ENCODE measurements at regions of chr6 and their contacts with region 1.

Region 1: GRCh38 chr6:36666726-36667591 is 11.6 kb upstream of the CDKN1A start:
- DNase-seq: peak; percentile 98
- H3K4me3 Mint-ChIP-seq: no peak overlapping the region
- H3K27ac Mint-ChIP-seq: peak overlapping the region; percentile 91
- H3K4me1 Mint-ChIP-seq: peaks cover 31% of the 10 kb centered on the region
- H3K27me3 Mint-ChIP-seq: no peaks in the 10 kb centered on the region
- CTCF ChIP-seq: no peak

Region 2: DNA sequence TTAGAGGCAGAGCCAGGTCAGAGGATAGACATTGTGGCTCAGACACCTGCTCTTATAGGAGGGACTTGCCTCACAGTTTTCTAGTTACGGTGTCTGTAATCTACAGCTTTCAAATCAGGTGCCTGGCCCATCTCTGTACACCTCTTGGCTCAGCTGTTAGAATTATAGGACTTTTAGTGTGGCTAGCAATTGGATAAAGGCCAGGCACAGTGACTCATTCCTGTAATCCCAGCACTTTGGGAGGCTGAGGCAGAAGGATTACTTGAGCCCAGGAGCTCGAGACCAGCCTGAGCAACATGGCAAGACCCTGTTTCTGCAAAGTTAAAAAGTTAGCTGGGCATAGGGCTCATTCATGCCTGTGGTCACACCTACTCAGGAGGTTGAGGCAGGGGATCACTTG is 450.4 kb before region 1 on chr6:
- CTCF ChIA-PET with region 1: no interaction called
- POLR2A ChIA-PET with region 1: no interaction called
- intact Hi-C with region 1: no loop called
- DNase-seq: peak; percentile 46
- H3K4me3 Mint-ChIP-seq: no peak overlapping the region
- H3K27ac Mint-ChIP-seq: no peak overlapping the region
- H3K4me1 Mint-ChIP-seq: no peaks in the 10 kb centered on the region
- H3K27me3 Mint-ChIP-seq: no peaks in the 10 kb centered on the region
- CTCF ChIP-seq: no peak

Region 3: DNA sequence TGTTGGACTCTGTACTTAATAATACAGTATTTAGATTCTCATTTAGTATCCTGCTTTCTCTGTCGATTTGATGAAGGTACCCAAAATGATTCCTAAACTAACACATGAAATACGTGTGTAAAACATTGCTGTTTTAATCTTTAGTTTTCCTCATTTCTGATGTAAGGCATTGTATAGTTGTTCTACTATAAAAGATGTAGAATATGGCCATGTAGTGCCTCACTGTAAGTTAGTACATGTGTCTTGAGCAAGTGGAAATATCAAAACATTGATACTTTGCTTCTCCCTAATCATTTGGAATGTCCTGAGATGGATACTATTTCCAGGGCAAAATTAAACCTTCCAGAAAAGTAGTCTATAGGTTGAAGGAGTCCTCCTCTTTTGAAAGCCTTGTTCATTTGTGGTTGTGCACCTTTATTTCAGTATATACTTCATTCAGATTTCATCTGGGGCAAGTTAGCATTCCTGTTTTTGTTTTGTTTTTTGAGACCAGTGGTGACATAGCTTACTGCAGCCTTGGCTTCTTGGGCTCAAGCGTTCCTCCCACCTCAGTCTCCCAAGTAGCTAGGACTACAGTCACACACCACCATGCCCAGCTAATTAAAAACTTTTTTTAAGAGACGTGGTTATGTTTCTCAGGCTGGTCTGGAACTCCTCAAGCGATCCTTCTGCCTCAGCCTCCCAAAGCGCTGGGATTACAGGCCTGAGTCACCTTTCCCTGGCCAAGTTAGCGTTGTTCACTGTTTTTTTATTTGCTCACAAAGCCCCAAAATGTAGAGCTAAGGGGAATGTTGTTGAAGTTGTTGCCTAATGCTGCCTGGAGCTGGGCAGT is 61.2 kb before region 1 on chr6:
- CTCF ChIA-PET with region 1: no interaction called
- POLR2A ChIA-PET with region 1: interaction called, 12 read pairs
- intact Hi-C with region 1: no loop called
- DNase-seq: no peak
- H3K4me3 Mint-ChIP-seq: no peak overlapping the region
- H3K27ac Mint-ChIP-seq: no peak overlapping the region
- H3K4me1 Mint-ChIP-seq: peaks cover 32% of the 10 kb centered on the region
- H3K27me3 Mint-ChIP-seq: no peaks in the 10 kb centered on the region
- CTCF ChIP-seq: no peak

Region 4: GRCh38 chr6:36642913-36643817 is 23.8 kb before region 1 on chr6:
- CTCF ChIA-PET with region 1: interaction called, 9 read pairs
- POLR2A ChIA-PET with region 1: interaction called, 43 read pairs
- intact Hi-C with region 1: no loop called
- DNase-seq: peak; percentile 95
- H3K4me3 Mint-ChIP-seq: no peak overlapping the region
- H3K27ac Mint-ChIP-seq: peak overlapping the region; percentile 31
- H3K4me1 Mint-ChIP-seq: peaks cover 14% of the 10 kb centered on the region
- H3K27me3 Mint-ChIP-seq: no peaks in the 10 kb centered on the region
- CTCF ChIP-seq: no peak